Posterior cingulate gyrus (tissue), 11 donors: ENCODE measurements at regions of chr5 and their contacts with region 1.

Region 1: DNA sequence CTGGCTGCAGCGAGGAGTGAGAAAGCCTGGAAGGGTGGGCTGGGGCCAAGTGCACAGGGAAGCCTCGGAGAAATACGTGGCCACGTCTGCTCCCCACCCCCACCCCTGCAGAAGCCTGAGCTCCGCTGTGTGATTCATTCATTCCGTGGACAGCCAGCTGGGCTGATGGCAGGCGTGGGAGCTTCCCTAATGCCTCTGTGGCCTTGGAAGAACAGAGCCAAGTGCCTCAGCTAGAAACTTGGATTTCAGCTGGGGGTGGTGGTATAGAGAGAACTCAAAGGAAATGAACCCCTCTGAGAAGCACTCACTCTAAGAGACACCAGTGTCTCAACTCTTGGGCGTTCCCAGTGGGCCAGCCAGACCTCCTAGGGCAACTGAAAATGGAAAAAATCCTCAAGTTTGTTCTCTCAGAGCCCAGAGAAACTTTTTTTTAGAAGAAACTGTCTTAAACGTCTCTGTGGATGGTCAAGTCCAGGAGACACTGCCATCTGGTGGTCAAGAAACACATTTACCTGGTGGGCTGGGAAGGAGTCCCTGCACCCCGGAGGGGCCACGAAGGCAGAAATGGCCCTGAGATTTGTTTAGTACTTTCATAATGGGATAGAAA is 18.0 kb downstream of the ATOX1 start:
- DNase-seq: peak in 5 of 10 donors; percentile 22 to 58 (median 47)

Region 2: DNA sequence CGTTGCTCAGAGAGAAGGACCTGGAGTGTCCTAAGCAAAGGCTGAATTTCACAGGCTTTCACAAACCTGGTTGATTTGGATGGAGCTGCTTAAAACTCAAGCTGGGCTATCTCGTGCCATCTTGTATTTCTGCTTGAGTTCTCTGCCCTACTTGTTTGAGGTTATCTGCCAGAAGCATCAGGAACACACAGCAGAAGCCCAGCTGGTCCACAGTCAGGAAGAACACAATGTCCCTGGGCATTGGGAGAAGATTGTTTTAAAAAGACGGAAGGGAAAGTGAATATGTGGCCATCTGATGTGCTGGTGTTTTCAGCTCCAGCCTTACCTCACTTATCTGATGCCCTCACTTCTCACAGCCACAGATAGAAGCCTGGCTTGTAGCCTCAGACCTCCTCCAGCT is 325.9 kb before region 1 on chr5:
- intact Hi-C with region 1: no loop called
- DNase-seq: no peak

Region 3: DNA sequence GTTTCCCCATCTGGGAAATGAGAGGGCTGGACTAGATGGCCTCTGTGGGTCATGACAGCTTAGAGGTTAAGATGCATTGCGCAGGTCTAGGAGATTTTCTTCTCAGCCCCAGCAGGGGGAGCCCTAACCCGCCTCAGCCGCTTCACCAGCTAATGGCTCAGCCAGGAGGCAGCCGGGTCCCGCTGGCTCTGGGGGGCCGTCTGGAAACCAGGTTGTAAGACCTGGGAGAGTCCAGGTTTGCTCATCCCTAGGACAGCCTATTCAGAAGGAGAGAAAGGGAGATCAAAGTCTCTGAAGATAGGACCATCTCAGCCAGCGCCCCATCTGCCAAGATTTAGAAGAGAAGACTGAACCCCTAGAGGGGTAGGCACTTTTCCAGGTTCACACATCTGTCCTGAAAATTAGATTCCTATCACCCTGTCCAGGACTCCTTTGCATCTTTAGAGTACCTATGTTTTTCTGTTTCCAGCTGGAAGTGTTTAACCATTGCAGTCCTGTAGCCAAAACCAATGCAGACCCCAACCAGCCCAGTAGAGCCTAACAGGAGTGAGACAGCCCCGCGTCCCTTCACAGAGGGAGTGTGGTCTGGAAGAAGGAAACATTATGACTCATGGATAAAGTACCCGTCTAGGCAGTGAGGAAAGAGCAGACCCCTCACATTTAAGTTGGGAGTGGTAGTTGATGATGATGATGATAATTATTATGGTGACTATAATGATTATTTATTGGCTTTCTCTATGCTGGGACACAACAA is 81.3 kb before region 1 on chr5:
- intact Hi-C with region 1: loop called (anchors 1 kb)
- DNase-seq: peak; percentile 66 to 98 (median 90)